Endothelial cell of umbilical vein (primary cell): ENCODE measurements at regions of chr22 and their contacts with region 1.

Region 1: DNA sequence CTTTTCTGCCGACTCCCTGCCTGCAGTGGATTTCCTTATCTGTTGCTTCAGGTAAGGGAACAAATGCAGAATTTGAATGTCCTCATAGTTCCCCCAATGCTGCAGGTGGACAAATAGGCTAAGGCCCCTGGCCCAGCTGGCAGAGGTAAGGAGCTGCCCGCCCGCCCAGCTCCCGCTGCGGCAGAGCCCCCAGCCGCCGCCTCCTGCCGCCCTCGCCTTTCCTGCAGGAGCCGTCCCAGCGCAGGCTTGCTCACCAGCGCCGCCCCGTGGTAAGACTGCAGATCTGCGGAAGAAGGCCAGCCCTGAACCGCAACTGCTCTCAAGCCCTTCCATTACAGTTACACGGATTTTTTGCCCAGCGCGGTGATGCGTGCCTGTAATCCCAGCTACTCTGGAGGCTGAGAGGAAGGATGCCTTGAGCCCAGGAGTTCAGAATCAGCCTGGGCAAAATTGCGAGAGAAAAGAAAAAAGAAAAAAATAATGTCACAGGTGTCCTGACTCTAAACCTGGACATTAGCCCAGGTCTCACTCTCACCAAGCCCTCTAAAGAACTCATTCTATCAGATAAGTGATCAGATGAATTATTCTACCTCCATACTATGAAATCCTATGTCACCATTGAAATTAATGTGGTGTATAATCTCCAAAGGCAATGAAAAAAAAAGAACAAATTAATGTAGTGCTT is 51.2 kb upstream of the EMID1 start:
- DNase-seq: peak; percentile 74
- H3K4me3 ChIP-seq: no peak overlapping the region
- H3K27ac ChIP-seq: no peak overlapping the region
- H3K4me1 ChIP-seq: no peaks in the 10 kb centered on the region
- H3K27me3 ChIP-seq: peaks cover 0 to 14% of the 10 kb centered on the region in 2 experiments
- CTCF ChIP-seq: peak; percentile 81 to 98
- POLR2A ChIP-seq: no peak

Region 2: DNA sequence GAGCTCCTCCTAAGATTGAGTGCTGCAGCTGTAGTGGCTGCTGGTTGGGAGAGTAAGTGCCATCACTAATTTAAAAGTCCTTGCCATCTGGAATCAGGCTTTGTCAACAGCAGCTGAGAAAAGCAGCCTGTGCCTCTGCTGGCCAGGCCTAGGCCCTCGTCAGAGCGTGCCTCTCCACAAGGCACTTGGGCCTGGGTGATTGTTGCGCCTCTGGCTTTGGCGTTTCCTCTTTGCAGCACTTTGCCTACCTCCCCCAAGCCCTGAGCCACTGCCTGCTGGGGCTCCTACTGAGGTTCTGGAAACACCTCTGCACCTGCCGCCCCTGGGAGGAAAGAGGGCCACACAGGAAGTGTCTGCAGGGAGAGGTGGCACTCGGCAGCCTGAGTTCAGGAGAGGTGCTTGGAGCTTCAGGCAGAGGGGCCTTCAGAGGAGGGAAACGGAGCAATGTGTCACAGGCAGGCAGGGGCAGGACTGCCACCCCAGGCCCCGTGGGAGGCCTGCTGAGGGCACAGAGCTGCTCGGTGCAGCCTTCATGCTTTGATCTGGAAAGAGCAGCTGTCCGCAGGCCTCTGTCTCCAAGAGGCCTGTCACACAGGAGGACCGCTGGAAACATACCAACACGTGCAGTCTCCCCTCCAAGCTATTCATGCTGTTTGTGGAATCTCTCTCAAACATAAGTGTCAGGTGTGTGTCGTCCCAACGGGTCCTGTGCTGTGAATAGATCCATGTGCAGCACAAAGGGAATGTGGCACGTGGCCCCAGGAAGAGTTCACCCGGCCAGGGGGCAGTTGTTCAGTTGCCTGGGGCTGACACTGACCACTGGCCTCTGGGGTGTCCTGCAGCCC is 10.3 kb before region 1 on chr22:
- CTCF ChIA-PET with region 1: interaction called, 19 read pairs
- POLR2A ChIA-PET with region 1: no interaction called
- dilution Hi-C with region 1: no loop called
- intact Hi-C with region 1: no loop called
- DNase-seq: no peak
- H3K4me3 ChIP-seq: no peak overlapping the region
- H3K27ac ChIP-seq: no peak overlapping the region
- H3K4me1 ChIP-seq: no peaks in the 10 kb centered on the region
- H3K27me3 ChIP-seq: peaks cover 0 to 5% of the 10 kb centered on the region in 2 experiments
- CTCF ChIP-seq: no peak
- POLR2A ChIP-seq: no peak

Region 3: DNA sequence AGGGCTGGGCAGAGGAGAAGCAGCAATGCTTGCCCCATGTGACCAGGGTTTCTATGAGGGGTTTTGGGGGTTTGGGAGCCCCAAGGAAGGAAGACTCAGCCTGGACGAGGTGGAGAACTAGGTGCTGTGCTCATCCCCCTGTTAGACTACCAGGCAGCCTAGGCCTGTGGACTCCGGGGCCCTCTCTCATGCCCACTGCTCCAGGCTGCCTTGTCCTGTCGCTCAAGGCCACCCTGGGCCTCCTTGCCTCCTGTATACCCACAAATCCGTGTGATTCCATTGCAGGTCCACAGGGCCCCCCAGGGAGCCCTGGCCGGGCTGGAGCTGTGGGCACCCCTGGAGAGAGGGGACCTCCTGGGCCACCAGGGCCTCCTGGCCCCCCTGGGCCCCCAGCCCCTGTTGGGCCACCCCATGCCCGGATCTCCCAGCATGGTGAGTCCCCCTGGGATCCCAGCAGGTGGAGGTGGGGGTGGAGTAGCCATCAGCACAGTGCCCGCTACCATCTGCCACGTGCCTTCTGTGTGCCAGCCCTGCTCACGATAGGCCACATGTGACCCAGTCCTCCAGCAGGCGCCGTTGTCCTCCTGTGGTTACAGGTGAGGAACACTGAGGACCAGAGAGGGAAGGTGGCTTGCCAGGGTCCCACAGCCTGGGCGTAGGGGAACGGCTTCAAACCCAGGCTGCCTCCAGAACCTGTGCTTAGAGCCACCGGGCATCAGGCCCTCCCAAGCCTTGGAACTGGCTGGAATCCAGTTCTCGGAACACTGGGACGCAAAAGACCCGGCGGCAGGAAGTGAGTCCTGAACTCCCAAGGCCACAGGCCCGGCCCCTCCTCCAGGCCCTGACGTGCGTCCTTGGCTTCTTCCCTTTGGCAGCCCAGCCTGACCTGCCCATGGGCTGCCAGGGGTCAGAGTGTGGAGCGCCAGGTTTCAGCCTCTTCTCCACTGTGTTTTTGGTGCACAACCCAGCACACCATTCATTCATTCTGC is 77.8 kb after region 1 on chr22:
- CTCF ChIA-PET with region 1: no interaction called
- POLR2A ChIA-PET with region 1: no interaction called
- dilution Hi-C with region 1: no loop called
- intact Hi-C with region 1: no loop called
- DNase-seq: peak; percentile 36
- H3K4me3 ChIP-seq: no peak overlapping the region
- H3K27ac ChIP-seq: no peak overlapping the region
- H3K4me1 ChIP-seq: peaks cover 8% of the 10 kb centered on the region
- H3K27me3 ChIP-seq: no peaks in the 10 kb centered on the region
- CTCF ChIP-seq: no peak
- POLR2A ChIP-seq: no peak

Region 4: GRCh38 chr22:29387921-29388758 is 233.6 kb after region 1 on chr22 and contains the start of gene AP1B1:
- CTCF ChIA-PET with region 1: no interaction called
- POLR2A ChIA-PET with region 1: no interaction called
- dilution Hi-C with region 1: no loop called
- intact Hi-C with region 1: no loop called
- DNase-seq: peak; percentile 86
- H3K4me3 ChIP-seq: peak within 1 kb of the TSS; percentile 73 to 97 (median 83)
- H3K27ac ChIP-seq: peak within 1 kb of the TSS; percentile 22
- H3K4me1 ChIP-seq: peaks cover 20% of the 10 kb centered on the region
- H3K27me3 ChIP-seq: no peaks in the 10 kb centered on the region
- CTCF ChIP-seq: no peak
- POLR2A ChIP-seq: peak; percentile 44
- total RNA-seq, gene AP1B1: 102 and 107 TPM in 2 replicates